GM13977 (cell line): ENCODE measurements at regions of chr5 and their contacts with region 1.

Region 1: GRCh38 chr5:140362860-140363630 is 3.1 kb downstream of the SLC4A9 start:
- DNase-seq: peak; percentile 88
- CTCF ChIP-seq: peak; percentile 99

Region 2: GRCh38 chr5:140401362-140402257 is 38.6 kb after region 1 on chr5 and contains the start of gene ANKHD1:
- in situ Hi-C with region 1: no loop called
- DNase-seq: peak; percentile 95
- CTCF ChIP-seq: no peak

Region 3: GRCh38 chr5:140725799-140726471 is 362.9 kb after region 1 on chr5:
- in situ Hi-C with region 1: loop called (anchors 10 kb)
- DNase-seq: peak; percentile 58
- CTCF ChIP-seq: no peak

Region 4: DNA sequence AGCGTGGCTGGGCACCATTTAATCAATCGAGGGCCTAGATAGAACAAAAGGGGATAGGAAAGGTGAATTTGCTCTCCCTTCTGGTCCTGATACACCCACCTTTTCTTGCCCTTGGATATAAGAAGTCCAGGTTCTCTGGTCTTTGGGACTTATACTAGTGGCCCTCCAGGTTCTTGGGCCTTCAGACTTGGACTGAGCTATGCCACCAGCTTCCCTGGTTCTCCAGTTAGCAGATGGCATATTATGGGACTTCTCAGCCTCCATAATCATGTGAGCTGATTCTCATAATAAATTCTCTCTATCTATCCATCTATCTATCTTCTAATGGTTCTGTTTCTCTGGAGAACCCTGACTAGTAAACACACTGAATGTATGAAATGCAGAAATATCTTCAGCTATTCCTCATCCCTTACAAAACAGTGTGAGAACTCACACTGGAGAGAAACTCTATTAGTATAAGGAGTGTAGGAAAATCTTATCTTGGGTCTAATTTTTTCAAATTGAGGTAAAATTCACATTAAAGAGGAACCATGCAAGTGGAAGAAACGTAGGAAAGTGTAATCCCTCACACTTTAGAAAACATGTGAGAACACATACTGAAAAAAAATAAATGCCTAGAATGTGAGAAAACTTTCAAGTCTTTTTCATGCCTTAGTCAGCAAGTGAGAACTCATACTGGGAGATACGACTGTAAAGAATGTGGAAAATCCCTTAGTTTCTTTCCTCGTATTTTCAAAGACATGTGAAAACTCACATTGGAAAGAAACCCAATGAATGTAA is 897.6 kb after region 1 on chr5:
- in situ Hi-C with region 1: no loop called
- DNase-seq: no peak
- CTCF ChIP-seq: no peak